HEK293T (cell line): ENCODE measurements at regions of chr1 and their contacts with region 1.

Region 1: DNA sequence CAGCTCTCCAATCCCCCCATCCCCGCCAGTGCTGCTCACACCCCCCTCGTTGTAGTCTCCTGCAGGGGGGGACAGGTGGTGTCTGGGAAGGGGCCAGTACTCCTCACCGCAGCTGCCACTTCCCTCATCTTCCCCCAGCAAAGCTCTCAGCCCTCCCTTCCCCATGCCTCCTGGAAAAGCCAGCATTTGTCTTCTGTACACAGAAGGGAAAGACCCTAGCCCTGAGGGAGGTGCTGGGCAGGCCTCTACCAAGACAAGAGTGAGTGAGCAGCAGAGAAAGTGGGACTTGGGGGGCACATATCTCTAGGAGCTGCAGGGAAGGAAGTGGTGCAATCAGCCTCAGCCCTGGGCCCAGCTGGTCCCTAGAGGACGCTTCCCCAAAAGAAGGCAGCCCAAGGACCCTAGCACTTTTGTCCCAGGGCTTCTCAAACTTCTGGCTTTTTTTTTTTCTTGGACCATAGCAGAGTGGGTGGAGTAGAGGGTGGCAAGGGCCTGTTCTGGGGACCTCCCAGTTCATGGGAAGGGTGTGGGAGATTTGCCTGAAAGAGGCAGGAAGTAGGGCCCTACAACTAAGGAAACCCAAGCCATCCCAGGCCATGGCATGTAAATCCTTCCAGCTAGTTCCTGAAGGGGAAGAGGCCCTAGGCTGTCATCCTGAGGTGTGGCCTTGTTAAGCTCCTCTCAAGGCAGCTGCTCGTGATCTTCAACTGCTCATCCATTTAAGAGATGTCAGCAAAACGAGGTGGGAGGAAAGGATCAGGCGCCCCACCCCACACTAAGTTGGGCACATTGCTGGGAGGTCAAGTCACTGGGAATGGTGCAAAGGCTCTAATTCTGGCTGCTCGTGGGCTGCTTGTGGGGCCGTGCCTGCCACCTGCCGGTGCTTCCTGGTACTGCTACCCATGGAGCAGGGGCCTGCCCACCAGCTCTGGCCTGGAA is 12.6 kb downstream of the ZC3H12A start:
- DNase-seq: peak; percentile 84

Region 2: DNA sequence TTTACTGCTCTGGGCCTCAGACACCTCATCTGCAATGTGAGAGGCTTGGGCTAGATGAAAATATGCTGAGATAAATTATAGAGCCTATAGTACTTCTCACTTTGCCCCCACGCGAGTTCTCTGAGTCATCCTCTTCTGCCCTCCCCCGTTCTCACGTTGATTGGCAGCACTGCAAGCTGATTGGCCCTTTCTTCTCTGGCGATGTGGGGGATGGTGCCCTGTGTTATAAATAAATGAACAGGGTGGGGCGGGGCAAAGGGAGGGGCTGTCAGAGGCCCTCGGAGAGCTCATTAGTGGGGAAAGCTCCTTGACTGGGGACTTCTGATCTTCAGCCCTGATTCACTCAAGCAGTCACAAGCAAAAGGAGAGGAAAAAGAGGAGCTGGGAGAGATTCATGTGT is 76.8 kb before region 1 on chr1:
- CTCF ChIA-PET with region 1: no interaction called
- POLR2A ChIA-PET with region 1: no interaction called
- DNase-seq: no peak

Region 3: GRCh38 chr1:37458528-37458927 is 28.4 kb before region 1 on chr1:
- CTCF ChIA-PET with region 1: interaction called, 22 read pairs
- POLR2A ChIA-PET with region 1: interaction called, 3 read pairs
- DNase-seq: no peak

Region 4: GRCh38 chr1:37474046-37474759 is 12.7 kb before region 1 on chr1 and contains the start of gene ZC3H12A:
- CTCF ChIA-PET with region 1: interaction called, 18 read pairs
- POLR2A ChIA-PET with region 1: interaction called, 11 read pairs
- DNase-seq: peak; percentile 98

Region 5: DNA sequence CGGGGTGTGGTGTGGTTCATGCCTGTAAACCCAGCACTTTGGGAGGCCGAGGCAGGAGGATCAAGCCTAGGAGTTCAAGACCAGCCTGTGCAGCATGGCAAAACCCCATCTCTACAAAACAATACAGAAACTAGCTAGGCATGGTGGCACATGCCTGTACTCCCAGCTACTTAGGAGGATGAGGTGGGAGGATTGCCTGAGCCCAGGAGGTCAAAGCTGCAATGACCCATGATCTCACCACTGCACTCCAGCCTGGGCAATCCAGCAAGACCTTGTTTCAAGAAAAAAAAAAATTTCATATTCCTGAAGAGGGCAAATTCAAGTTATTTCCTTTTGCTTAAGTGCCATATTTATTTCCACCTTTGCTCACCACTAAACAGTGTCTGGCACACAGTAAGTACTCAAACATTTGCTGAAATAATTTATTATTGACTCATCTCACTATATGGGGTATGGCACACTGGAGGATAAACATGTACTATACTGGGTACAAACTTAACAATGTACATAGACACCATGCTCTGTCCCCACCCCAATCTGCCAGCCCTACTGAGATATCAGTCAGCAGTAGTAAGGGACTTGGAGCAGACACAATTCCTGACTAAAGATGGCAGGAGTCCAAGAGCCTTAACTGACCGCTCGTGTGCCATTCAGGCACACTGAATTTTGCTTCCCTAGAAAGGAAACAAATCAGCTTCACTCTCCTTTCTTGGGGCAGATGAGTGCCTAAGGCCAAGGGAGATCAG is 12.1 kb after region 1 on chr1:
- CTCF ChIA-PET with region 1: interaction called, 10 read pairs
- POLR2A ChIA-PET with region 1: no interaction called
- DNase-seq: no peak